Activated T-helper 2 cell treated with anti-CD3 and anti-CD28 coated beads, Interferon-gamma antibody, Interleukin-2, Interleukin-4, amounts not matched to agents 10 μg/mL and 5 μg/mL and 100 μg/mL, durations not matched to agents 14 hours and 24 hours and 36 hours (primary cell): ENCODE measurements at regions of chr20 and their contacts with region 1.

Region 1: GRCh38 chr20:18287915-18288748 is at the start of gene ZNF133:
- DNase-seq: peak; percentile 94
- H3K4me3 Mint-ChIP-seq: peak within 1 kb of the TSS; percentile 97
- H3K27ac Mint-ChIP-seq: peak within 1 kb of the TSS; percentile 97
- H3K4me1 Mint-ChIP-seq: peaks cover 18% of the 10 kb centered on the region
- H3K27me3 Mint-ChIP-seq: peaks cover 8% of the 10 kb centered on the region
- total RNA-seq, gene ZNF133: 8.7 and 10.0 TPM in 2 replicates

Region 2: DNA sequence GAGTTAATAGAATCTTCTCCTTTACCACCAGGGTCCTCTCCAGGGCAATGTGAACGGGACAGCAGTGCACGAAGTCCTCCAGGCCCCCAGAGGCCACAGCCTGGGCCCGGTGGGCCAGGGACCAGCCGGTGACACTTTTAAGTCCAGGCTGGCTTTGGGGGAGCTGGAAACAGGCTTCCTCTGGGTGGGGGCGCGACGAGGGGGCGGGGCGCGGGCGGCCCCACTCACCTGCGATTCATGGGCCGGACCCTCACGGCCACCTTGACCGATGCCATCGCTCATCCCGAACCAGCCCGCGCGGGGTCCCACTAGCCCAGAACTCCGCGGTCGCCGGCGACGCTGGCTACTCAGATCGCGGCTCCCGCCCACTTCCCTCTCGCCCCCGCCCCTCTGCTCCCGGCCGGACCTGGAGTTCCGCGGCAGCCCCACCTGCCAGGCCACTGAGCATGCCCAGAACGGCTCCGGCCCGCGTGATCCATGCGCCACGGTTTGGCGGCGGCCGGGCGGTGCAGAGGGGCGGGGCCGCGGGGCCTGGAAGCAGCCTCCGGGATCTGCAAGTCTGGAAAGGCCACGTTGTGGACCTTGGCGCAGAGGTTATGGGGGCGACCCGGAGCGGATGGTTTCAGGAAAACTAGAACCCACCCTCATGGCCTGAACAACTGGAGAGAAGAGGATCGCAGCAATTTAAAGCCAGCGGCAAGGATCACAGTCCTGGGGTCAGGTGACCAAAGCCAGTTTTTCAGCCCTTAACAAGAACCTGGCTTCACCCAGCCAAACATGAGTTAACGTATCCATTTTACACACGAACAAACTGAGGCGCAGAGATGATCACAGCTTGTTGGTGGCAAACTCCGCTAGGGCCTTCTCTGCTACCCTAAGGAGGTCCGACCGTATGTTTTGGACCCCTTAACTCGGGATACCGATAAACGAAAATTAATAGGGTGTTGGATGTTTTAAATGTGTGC is 1714.8 kb before region 1 on chr20 and contains the start of gene KIF16B:
- intact Hi-C with region 1: loop called (anchors 5 kb)
- DNase-seq: peak; percentile 80
- H3K4me3 Mint-ChIP-seq: peak within 1 kb of the TSS; percentile 90
- H3K27ac Mint-ChIP-seq: peak within 1 kb of the TSS; percentile 81
- H3K4me1 Mint-ChIP-seq: peaks cover 26% of the 10 kb centered on the region
- H3K27me3 Mint-ChIP-seq: no peaks in the 10 kb centered on the region
- total RNA-seq, gene KIF16B: 6.2 and 6.8 TPM in 2 replicates

Region 3: DNA sequence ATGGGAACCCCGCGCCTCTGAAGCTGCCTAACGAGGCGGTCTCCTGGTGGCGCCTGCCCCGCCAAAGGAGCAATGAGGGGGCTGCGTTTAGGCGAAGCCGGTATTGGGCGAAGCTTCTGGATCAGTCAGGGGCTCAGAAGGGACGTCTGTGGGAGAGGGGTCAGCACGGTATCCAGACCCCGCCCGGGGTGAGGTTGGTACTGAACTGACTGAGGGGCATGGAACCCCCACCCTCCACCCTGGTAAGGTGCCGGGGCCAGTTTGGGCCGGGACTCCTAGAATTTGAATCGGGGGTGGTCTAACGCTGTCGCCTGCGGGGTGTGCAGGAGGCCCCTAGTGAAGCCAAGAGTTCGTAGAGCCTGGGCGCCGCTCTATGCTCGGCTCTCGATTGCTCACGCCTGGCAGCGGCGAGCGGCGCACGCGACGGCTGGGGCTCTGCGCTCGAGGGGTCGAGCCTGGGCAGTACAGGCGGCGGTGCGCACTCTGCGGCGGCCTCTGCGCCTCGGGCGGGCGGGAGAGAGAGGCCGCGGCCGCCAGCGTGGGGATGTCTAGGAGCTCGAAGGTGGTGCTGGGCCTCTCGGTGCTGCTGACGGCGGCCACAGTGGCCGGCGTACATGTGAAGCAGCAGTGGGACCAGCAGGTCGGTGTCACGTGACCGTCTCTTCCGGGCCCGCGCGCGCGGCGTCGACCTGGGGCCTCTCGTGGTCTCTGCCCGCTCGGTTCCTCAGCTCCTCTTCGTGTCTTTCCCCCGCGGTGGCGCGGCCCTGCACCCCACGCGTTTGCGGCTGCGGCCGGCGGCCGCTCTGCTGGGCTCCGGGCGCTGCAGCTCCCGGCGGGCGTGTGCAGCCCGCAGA is 150.5 kb before region 1 on chr20 and contains the starts of genes KAT14 and PET117:
- intact Hi-C with region 1: loop called (anchors 2 kb)
- DNase-seq: peak; percentile 90
- H3K4me3 Mint-ChIP-seq: peak within 1 kb of the TSS; percentile 80
- H3K27ac Mint-ChIP-seq: peak within 1 kb of the TSS; percentile 83
- H3K4me1 Mint-ChIP-seq: peaks cover 23% of the 10 kb centered on the region
- H3K27me3 Mint-ChIP-seq: no peaks in the 10 kb centered on the region
- total RNA-seq, gene KAT14: 15.3 and 16.5 TPM in 2 replicates
- total RNA-seq, gene PET117: 15.7 and 17.0 TPM in 2 replicates

Region 4: GRCh38 chr20:18466894-18467730 is 179.0 kb after region 1 on chr20 and contains the starts of genes DZANK1 and POLR3F:
- intact Hi-C with region 1: loop called (anchors 2 kb)
- DNase-seq: peak; percentile 90
- H3K4me3 Mint-ChIP-seq: peak within 1 kb of the TSS; percentile 97
- H3K27ac Mint-ChIP-seq: peak within 1 kb of the TSS; percentile 88
- H3K4me1 Mint-ChIP-seq: peaks cover 19% of the 10 kb centered on the region
- H3K27me3 Mint-ChIP-seq: no peaks in the 10 kb centered on the region
- total RNA-seq, gene DZANK1: 1.3 TPM in 2 replicates
- total RNA-seq, gene POLR3F: 12.5 and 13.5 TPM in 2 replicates

Region 5: DNA sequence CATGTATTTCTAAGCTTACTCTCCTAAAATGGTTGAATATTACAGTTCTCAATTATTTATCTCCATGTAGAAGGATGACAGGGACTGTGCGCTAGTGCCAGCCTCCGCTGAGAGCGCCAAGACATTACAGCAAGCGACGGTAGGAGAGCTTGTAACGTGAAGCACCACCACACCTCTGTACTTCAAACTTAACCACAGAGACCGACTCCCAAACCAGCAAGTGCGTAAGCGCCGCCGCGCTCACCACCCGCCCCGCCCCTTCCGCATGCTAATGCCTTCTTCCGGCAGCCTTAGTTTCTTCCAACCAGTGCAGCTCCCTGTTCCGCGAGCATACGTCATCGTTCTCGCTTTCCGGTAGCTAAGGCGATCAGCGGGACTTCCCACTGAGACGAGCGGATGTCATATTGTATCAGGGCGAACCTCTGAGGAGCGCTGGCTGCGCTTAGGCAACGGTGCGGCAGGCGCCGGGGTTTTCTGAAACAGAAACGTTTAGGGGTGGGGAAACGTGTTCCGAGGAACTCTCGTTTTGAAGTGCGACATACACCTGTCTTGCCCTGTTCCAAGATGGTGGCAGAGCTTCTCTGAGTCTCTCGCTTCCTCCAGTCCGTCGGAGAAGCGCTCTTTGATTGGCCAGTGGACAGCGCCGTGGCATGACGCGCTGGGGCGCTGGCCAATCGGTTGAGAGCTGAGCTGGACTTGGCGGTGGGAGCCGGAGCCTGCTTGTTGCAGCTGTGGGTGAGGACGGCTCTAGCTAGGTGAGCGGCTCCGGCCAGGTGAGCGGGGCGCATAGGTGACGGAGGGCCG is 219.3 kb after region 1 on chr20 and contains the start of gene SEC23B:
- intact Hi-C with region 1: loop called (anchors 1 kb)
- DNase-seq: peak; percentile 97
- H3K4me3 Mint-ChIP-seq: peak within 1 kb of the TSS; percentile 100
- H3K27ac Mint-ChIP-seq: peak within 1 kb of the TSS; percentile 100
- H3K4me1 Mint-ChIP-seq: peaks cover 27% of the 10 kb centered on the region
- H3K27me3 Mint-ChIP-seq: no peaks in the 10 kb centered on the region
- total RNA-seq, gene SEC23B: 126 and 131 TPM in 2 replicates

Region 6: DNA sequence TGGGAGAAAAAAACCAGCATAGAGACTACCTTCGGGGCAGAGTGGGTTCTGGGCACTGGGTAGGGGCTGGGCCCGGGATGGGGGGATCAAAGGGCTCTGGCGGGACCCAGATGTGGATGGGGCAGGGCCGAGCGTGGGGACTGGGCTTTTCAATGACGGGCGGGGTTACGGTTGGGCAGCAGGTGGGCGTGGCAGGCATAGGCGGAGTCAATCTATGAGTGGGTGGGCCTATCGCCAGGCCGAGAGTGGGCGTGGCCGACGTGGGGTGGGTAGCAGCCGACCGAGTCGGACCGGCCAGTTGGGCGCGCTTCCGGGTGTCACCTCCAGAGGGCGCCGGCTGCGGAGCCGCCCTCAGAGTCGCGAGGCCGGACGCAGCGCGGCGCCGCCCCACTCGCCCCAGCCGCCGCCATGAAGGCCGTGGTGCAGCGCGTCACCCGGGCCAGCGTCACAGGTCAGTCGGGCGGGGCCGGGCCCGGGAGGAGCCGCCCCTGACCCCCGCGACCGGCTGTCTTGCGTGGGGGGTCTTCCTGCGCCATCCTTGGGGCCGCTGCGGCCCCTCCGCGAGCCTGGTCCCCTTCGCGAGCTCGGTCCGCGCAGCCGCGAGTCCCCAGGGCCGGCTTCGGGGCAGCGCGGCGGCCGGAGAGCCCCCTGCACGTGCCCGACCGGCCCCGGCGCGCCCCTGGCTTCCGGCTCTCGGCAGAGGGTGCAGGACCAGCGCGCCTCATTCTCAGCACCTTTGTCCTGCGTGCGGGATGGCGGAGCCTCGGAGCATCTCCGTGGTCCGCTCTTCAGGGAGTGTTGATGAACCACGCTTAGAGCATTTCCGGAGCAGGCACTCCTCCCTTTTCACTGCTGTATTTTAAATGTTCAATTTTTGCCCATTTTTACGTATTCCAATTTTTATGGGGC is 299.8 kb after region 1 on chr20 and contains the start of gene DTD1:
- intact Hi-C with region 1: loop called (anchors 10 kb)
- DNase-seq: peak; percentile 83
- H3K4me3 Mint-ChIP-seq: peak within 1 kb of the TSS; percentile 87
- H3K27ac Mint-ChIP-seq: peak within 1 kb of the TSS; percentile 74
- H3K4me1 Mint-ChIP-seq: peaks cover 20% of the 10 kb centered on the region
- H3K27me3 Mint-ChIP-seq: peaks cover 9% of the 10 kb centered on the region
- total RNA-seq, gene DTD1: 49.9 and 50.3 TPM in 2 replicates

Region 7: GRCh38 chr20:18793625-18794427 is 505.7 kb after region 1 on chr20:
- intact Hi-C with region 1: loop called (anchors 10 kb)
- DNase-seq: peak; percentile 78
- H3K4me3 Mint-ChIP-seq: peak overlapping the region; percentile 86
- H3K27ac Mint-ChIP-seq: peak overlapping the region; percentile 83
- H3K4me1 Mint-ChIP-seq: peaks cover 10% of the 10 kb centered on the region
- H3K27me3 Mint-ChIP-seq: peaks cover 11% of the 10 kb centered on the region